ENCODE measurements at regions of chr19 and their contacts with region 1.

Region 1: GRCh38 chr19:10580979-10581631 is 6.0 kb downstream of the AP1M2 start:
- DNase-seq: peak; percentile 86 to 96 (median 93)
- ATAC-seq: peak; percentile 83 to 84
- H3K4me3 ChIP-seq: no peak overlapping the region
- H3K27ac ChIP-seq: no peak overlapping the region
- H3K4me1 ChIP-seq: no peaks in the 10 kb centered on the region
- H3K27me3 ChIP-seq: no peaks in the 10 kb centered on the region

Region 2: GRCh38 chr19:10644260-10645007 is 63.3 kb after region 1 on chr19:
- intact Hi-C with region 1: loop called (anchors 1 to 2 kb)
- DNase-seq: peak; percentile 86 to 95 (median 94)
- ATAC-seq: peak; percentile 86 to 88
- H3K4me3 ChIP-seq: no peak overlapping the region
- H3K27ac ChIP-seq: no peak overlapping the region
- H3K4me1 ChIP-seq: no peaks in the 10 kb centered on the region
- H3K27me3 ChIP-seq: no peaks in the 10 kb centered on the region

Region 3: GRCh38 chr19:10695401-10696398 is 114.6 kb after region 1 on chr19:
- intact Hi-C with region 1: loop called in 2 of 4 experiments (anchors 5 kb)
- DNase-seq: peak; percentile 97 to 99 (median 98)
- ATAC-seq: peak; percentile 98
- H3K4me3 ChIP-seq: no peak overlapping the region
- H3K27ac ChIP-seq: no peak overlapping the region
- H3K4me1 ChIP-seq: peaks cover 7% of the 10 kb centered on the region
- H3K27me3 ChIP-seq: no peaks in the 10 kb centered on the region